Activated naive CD4-positive, alpha-beta T cell treated with anti-CD3 and anti-CD28 coated beads for 36 hours (primary cell): ENCODE measurements at regions of chr11 and their contacts with region 1.

Region 1: DNA sequence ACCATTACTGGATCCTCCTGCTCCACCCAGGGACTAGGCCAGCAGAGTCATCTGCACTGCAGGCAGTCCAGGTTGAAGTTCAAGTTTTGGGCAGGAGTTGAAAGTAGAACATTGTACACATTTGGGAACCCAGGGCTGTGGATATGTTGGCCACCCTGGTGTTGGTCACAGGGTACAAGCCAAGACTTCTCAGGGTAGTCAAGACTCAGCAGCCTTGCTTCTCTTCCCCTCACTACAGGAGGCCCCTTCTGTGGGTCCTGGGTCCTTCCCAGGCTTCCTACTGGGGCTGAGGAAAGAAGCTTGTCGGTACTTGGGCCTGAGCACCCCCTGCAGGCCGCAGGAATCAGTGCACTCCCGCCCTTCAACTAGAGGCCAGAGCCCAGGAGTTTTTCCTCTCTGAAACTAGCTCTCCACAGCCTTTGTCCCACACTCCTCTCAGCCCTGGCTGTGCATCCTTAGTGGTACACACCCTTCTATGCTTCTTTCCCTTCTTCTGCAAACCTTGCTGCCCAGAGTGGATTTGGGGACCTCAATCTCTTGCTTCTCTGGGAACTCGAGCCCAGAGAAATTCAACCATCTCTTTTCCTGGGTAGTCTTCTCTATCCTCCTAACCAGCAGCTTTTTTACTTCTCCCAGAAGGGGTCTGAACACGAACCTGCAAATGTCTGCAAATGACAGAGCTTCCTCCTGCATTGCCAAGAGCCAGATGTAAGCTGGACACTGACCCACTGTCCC is 2.6 kb upstream of the HPX start:
- DNase-seq: peak; percentile 69
- H3K4me3 Mint-ChIP-seq: no peak overlapping the region
- H3K27ac Mint-ChIP-seq: no peak overlapping the region
- H3K4me1 Mint-ChIP-seq: no peaks in the 10 kb centered on the region
- H3K27me3 Mint-ChIP-seq: no peaks in the 10 kb centered on the region

Region 2: DNA sequence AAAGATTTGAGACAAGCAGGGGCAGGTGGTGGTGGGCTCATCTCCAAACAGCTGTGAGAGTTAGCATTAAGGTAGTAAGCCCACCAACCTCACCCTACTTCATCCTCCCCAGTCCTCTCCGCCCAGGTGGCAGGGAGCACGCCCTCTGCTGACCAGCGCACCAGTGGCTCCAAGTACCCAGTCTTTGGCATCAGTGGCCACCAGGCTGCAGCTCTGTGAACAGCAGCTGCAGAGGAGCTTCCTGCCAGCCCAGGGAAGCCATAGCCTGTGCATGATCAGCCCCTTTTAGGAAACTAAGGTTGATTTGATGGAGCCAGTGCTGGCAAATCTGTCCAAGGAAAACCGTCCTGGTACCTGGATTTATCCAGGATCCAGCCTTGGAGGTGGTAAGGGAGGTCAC is 144.8 kb before region 1 on chr11:
- CTCF ChIA-PET with region 1: interaction called, 3 read pairs
- intact Hi-C with region 1: loop called (anchors 1 kb)
- DNase-seq: peak; percentile 43
- H3K4me3 Mint-ChIP-seq: no peak overlapping the region
- H3K27ac Mint-ChIP-seq: no peak overlapping the region
- H3K4me1 Mint-ChIP-seq: no peaks in the 10 kb centered on the region
- H3K27me3 Mint-ChIP-seq: peaks cover 4% of the 10 kb centered on the region

Region 3: GRCh38 chr11:6402561-6402981 is 40.9 kb before region 1 on chr11:
- CTCF ChIA-PET with region 1: interaction called, 11 read pairs
- intact Hi-C with region 1: no loop called
- DNase-seq: peak; percentile 94
- H3K4me3 Mint-ChIP-seq: peak overlapping the region; percentile 64
- H3K27ac Mint-ChIP-seq: peak overlapping the region; percentile 84
- H3K4me1 Mint-ChIP-seq: peaks cover 89% of the 10 kb centered on the region
- H3K27me3 Mint-ChIP-seq: no peaks in the 10 kb centered on the region

Region 4: GRCh38 chr11:6458352-6459098 is 15.1 kb after region 1 on chr11:
- CTCF ChIA-PET with region 1: interaction called, 12 read pairs
- intact Hi-C with region 1: no loop called
- DNase-seq: no peak
- H3K4me3 Mint-ChIP-seq: no peak overlapping the region
- H3K27ac Mint-ChIP-seq: no peak overlapping the region
- H3K4me1 Mint-ChIP-seq: no peaks in the 10 kb centered on the region
- H3K27me3 Mint-ChIP-seq: no peaks in the 10 kb centered on the region

Region 5: DNA sequence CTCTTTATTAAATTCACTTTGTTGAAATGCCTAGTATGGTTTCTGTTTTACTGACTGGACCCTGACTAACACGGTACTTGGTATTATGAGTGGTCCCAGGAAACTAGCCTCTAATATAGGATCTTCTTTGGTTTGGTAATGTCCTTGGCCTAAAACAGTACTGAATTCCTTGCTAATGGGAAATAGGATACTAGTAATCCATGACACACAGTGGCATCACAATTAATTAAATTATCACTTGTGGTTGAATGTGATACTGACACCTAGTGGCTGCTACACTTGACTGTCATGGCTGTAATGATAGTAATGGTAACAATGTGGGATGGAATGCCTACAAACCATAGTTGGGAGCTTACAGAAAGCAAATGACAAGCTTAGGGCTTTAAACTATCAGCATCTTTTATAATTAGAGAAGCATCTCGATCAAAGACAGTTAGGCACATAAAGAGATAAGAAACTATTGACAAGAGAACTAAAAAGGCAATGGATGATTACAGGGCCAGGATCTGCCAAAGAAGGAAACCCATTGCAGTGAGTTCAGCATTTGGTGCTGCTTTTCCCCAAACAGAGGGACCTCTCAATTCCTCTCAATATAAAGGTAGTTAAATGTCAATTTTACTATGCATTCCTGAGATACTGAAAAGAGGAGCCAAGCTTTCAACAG is 62.3 kb after region 1 on chr11:
- CTCF ChIA-PET with region 1: interaction called, 28 read pairs
- intact Hi-C with region 1: loop called (anchors 1 kb)
- DNase-seq: peak; percentile 21
- H3K4me3 Mint-ChIP-seq: no peak overlapping the region
- H3K27ac Mint-ChIP-seq: no peak overlapping the region
- H3K4me1 Mint-ChIP-seq: no peaks in the 10 kb centered on the region
- H3K27me3 Mint-ChIP-seq: no peaks in the 10 kb centered on the region

Region 6: DNA sequence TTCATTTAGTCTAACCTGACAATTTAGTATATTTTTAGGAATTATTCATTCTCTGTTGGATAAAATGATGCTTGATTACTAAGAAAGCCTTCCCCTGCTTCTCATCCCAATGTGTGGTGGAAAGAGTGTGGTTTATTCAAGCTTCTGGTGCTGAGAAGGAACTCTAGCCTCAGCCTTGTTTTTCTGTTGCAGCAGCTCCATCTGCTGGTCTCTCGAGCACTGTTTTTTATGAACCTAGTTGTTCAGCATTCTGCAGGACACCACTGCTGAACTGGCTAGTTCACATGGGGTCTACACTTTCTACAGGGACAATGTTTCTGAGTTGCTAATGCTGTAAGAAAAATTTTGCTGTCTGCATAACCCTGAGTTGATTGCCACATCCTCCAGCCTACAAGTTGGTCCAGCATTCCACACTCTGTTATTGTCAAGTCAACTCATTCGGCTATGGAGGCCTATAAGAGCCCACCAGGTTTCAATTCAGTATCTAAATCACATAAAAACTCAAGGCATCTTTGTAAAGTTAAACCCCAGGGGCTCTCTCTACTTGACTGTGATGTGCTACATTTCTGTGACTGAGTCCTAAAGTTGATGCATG is 314.0 kb after region 1 on chr11:
- CTCF ChIA-PET with region 1: interaction called, 5 read pairs
- intact Hi-C with region 1: loop called (anchors 5 kb)
- DNase-seq: peak; percentile 86
- H3K4me3 Mint-ChIP-seq: no peak overlapping the region
- H3K27ac Mint-ChIP-seq: no peak overlapping the region
- H3K4me1 Mint-ChIP-seq: peaks cover 10% of the 10 kb centered on the region
- H3K27me3 Mint-ChIP-seq: no peaks in the 10 kb centered on the region